PC-3 (cell line): ENCODE measurements at regions of chr4 and their contacts with region 1.

Region 1: DNA sequence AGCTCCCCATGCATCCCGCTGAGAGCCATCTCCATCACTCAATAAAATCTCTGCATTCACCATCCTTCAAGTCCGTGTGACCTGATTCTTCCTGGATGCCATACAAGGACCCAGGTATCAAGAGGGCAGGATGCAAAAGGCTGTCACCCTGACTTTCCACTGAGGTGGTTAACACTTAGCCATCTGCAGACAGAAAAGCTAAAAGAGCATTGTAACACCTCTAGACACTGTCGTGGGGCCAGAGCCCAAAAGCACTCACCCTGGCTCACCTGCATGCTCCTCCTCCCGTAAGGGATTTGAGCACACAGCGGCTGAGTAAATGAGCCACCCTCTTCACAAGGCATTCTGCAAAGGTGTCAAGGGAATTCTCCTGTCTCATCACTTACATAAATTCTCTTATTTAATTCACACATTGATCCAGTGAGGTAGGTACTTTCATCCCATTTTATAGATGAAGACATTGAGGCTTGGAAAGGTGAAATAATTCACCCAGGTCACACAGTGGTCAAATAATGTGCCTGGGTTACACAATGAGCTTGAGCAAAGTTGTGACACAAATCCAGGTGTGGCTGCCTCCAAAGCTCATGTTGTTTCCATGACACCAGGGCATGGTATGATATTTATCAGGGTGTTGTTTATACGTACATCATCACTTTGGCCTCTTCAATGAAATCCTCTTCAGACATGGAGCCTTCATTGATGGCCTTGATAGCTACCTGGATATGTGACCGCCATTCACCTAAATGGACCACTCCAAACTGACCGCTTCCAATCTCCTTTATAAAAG is 48.0 kb downstream of the TXK start:
- DNase-seq: no peak
- ATAC-seq: no peak
- H3K4me3 ChIP-seq: no peak overlapping the region
- H3K27ac ChIP-seq: no peak overlapping the region
- H3K4me1 ChIP-seq: peaks cover 25% of the 10 kb centered on the region
- H3K27me3 ChIP-seq: no peaks in the 10 kb centered on the region
- CTCF ChIP-seq: no peak

Region 2: DNA sequence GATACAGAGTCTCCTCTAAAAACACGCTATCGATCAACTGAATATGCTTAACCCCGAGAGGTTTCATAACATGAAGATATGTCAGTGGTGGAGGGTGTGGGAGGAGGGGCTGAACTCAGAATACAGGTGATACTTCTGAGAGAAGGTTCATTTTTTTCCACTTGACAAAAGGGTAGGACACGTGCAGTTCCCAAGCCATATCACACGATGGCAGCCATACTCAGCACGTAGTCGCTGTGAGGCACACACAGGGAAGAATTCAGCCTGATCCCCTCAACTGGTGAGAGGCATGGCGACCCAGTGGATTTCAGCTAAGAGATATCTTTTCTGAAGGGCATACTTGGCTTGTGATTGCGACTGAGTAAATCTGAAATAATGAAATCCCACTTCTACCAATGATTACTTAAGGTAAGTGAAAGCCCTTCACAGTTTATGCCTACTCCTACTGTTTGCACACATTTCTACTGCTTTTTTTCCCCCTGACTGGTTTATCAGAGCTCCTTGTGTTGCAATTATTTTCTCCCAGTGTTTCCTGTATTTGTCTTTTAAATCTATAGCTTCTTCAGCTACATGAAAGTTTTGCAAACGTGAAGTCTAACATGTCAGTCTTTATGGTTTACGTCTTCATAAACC is 381.2 kb before region 1 on chr4:
- CTCF ChIA-PET with region 1: no interaction called
- POLR2A ChIA-PET with region 1: no interaction called
- intact Hi-C with region 1: loop called (anchors 5 kb)
- DNase-seq: peak; percentile 38
- ATAC-seq: peak; percentile 80
- H3K4me3 ChIP-seq: no peak overlapping the region
- H3K27ac ChIP-seq: no peak overlapping the region
- H3K4me1 ChIP-seq: no peaks in the 10 kb centered on the region
- H3K27me3 ChIP-seq: 0 out of 2 replicates have a peak, but pooled peaks cover 3% of the 10 kb centered on the region
- CTCF ChIP-seq: peak; percentile 54

Region 3: DNA sequence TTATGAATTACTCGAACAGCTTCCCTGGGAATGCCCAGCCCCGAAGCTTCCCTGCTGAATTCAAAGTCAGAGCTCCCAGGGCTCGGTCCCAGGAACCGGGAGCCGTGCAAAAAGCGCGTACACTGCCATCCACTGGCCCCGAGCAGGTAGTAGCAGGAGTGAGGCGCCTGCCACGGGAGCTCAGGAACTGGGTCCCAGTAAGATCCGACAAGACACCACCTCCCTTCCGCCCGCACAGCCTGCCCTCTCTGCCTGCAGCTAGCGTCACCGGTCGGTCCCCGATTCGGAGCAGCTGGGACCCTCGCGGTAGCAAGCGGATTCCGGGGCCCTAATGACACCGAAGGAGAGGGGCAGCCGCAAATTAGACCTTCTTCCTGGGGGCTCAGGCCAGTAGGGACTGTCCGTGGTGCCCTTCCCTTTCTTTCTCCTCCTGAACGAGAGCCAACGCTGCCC is 249.3 kb before region 1 on chr4:
- CTCF ChIA-PET with region 1: interaction called, 5 read pairs
- POLR2A ChIA-PET with region 1: interaction called, 10 read pairs
- intact Hi-C with region 1: loop called (anchors 5 kb)
- DNase-seq: peak; percentile 83
- ATAC-seq: peak; percentile 89
- H3K4me3 ChIP-seq: peak overlapping the region; percentile 87
- H3K27ac ChIP-seq: no peak overlapping the region
- H3K4me1 ChIP-seq: 0 out of 2 replicates have a peak, but pooled peaks cover 5% of the 10 kb centered on the region
- H3K27me3 ChIP-seq: no peaks in the 10 kb centered on the region
- CTCF ChIP-seq: peak; percentile 67

Region 4: GRCh38 chr4:47926639-47927258 is 159.3 kb before region 1 on chr4:
- CTCF ChIA-PET with region 1: no interaction called
- POLR2A ChIA-PET with region 1: no interaction called
- intact Hi-C with region 1: loop called (anchors 1 kb)
- DNase-seq: peak; percentile 67
- ATAC-seq: peak; percentile 97
- H3K4me3 ChIP-seq: peak overlapping the region; percentile 65
- H3K27ac ChIP-seq: no peak overlapping the region
- H3K4me1 ChIP-seq: peaks cover 11% of the 10 kb centered on the region
- H3K27me3 ChIP-seq: no peaks in the 10 kb centered on the region
- CTCF ChIP-seq: peak; percentile 72

Region 5: GRCh38 chr4:47972181-47972580 is 113.8 kb before region 1 on chr4:
- CTCF ChIA-PET with region 1: no interaction called
- POLR2A ChIA-PET with region 1: no interaction called
- intact Hi-C with region 1: no loop called
- DNase-seq: no peak
- ATAC-seq: no peak
- H3K4me3 ChIP-seq: no peak overlapping the region
- H3K27ac ChIP-seq: no peak overlapping the region
- H3K4me1 ChIP-seq: no peaks in the 10 kb centered on the region; the same call in 1 of the 2 replicates
- H3K27me3 ChIP-seq: no peaks in the 10 kb centered on the region
- CTCF ChIP-seq: no peak

Region 6: GRCh38 chr4:48016141-48017103 is 69.6 kb before region 1 on chr4 and contains the starts of genes CNGA1 and NIPAL1:
- CTCF ChIA-PET with region 1: no interaction called
- POLR2A ChIA-PET with region 1: no interaction called
- intact Hi-C with region 1: loop called (anchors 1 kb)
- DNase-seq: peak; percentile 90
- ATAC-seq: peak; percentile 83
- H3K4me3 ChIP-seq: peak within 1 kb of the TSS; percentile 83
- H3K27ac ChIP-seq: peak within 1 kb of the TSS; percentile 96
- H3K4me1 ChIP-seq: peaks cover 19% of the 10 kb centered on the region
- H3K27me3 ChIP-seq: no peaks in the 10 kb centered on the region
- CTCF ChIP-seq: peak; percentile 43; the same call in 1 of the 2 replicates
- total RNA-seq, gene CNGA1: 0.29 and 1.1 TPM in 2 replicates
- total RNA-seq, gene NIPAL1: 5.9 and 7.3 TPM in 2 replicates

Region 7: GRCh38 chr4:48033825-48034413 is 52.1 kb before region 1 on chr4:
- CTCF ChIA-PET with region 1: no interaction called
- POLR2A ChIA-PET with region 1: no interaction called
- intact Hi-C with region 1: loop called (anchors 2 kb)
- DNase-seq: peak; percentile 61
- ATAC-seq: peak; percentile 33; the same call in 1 of the 2 replicates
- H3K4me3 ChIP-seq: no peak overlapping the region
- H3K27ac ChIP-seq: no peak overlapping the region
- H3K4me1 ChIP-seq: peaks cover 11% of the 10 kb centered on the region
- H3K27me3 ChIP-seq: no peaks in the 10 kb centered on the region
- CTCF ChIP-seq: peak; percentile 74

Region 8: DNA sequence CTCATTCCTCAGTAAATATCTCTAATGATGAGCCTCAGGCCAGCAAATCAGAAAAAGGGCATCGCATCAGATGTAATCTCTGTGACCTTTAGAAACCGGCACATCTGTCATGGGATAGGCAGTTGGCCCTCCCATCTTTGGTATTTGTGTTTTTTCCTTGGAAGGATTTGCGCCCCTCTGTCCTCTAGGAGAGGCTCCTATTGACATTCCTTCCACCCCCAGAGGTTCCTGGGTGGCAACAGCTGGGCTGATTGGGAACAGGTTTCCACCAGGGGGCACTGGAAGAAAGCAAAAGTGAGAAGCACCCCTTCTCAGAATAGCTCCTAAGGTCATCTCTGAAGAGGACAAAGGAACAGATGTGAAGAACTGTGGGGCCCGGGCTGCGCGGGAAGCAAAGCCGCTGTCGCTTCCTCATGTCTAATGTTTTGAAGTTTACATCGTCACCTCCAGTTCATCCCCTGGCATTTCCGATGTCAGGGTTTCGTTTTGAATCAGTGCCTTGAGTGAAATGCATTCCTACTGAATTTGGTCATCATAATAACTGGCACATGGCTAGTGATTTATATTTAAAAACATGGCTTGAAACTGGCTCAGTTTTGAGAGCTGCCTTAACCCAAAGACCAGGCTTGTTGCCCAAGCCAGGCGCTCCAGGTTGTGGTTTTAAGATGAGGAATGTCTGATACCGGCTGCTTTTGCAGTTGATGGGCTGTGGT is 41.8 kb after region 1 on chr4:
- CTCF ChIA-PET with region 1: no interaction called
- POLR2A ChIA-PET with region 1: no interaction called
- intact Hi-C with region 1: no loop called
- DNase-seq: peak; percentile 91
- ATAC-seq: peak; percentile 91
- H3K4me3 ChIP-seq: peak overlapping the region; percentile 37
- H3K27ac ChIP-seq: peak overlapping the region; percentile 31
- H3K4me1 ChIP-seq: peaks cover 30% of the 10 kb centered on the region
- H3K27me3 ChIP-seq: no peaks in the 10 kb centered on the region
- CTCF ChIP-seq: peak; percentile 75

Region 9: DNA sequence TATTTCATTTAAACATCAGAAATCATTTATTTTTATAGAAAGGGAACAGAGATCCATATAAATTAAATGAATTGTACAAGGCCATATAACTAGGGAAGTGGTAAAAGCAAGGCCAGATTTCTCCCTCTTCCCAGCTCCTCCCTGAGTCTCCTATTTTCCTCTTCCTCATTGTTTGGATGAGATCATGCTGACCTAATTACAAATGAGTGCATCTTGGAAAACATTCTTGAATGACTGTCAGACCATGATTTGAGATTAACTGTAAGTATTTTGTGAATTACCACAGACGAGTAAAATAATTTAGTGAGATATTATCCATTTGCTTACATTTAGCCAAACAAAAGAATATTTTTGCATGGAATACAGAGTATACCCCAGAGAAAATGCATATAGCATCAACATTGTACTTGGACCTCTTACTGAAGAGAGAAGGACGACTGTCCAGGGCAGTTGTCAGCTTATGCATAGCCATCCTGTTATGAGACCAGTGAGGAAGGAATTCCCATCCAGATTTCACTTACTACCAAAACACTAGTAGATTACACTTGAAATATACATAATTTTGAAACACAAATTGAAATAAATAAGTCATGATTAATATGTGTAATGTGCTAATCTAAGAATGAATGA is 302.6 kb after region 1 on chr4:
- CTCF ChIA-PET with region 1: no interaction called
- POLR2A ChIA-PET with region 1: no interaction called
- intact Hi-C with region 1: no loop called
- DNase-seq: no peak
- ATAC-seq: no peak
- H3K4me3 ChIP-seq: no peak overlapping the region
- H3K27ac ChIP-seq: no peak overlapping the region
- H3K4me1 ChIP-seq: no peaks in the 10 kb centered on the region
- H3K27me3 ChIP-seq: no peaks in the 10 kb centered on the region
- CTCF ChIP-seq: no peak